ENCODE measurements at regions of chr20 and their contacts with region 1.

Region 1: GRCh38 chr20:34190679-34191090 is 50.5 kb upstream of the ASIP start:
- DNase-seq: peak; percentile 45 to 78
- H3K4me3 ChIP-seq: no peak overlapping the region
- H3K27ac ChIP-seq: no peak overlapping the region
- H3K4me1 ChIP-seq: no peaks in the 10 kb centered on the region
- H3K27me3 ChIP-seq: peaks cover 8% of the 10 kb centered on the region; the same call in 1 of the 2 replicates
- CTCF ChIP-seq: peak; percentile 78

Region 2: DNA sequence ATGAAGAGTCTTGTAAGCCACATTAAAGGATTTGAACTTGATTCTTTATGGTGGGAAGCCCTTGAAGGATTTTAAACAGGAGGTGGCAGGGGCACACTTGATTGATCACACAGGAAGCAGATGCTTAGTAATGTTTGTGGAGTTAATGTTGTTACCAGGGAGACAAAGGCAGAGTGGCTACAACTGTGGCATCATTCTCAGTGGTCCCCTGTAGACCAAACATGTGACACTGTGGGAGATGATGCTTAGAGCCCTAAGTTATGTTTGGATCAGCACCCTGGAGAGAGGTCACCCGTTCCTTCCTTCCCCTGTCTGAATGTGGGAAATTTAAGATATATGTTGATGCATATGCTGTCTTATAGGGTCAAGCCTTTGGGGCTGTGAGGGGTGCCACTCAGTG is 131.9 kb before region 1 on chr20:
- CTCF ChIA-PET with region 1: no interaction called
- POLR2A ChIA-PET with region 1: no interaction called
- intact Hi-C with region 1: no loop called
- DNase-seq: no peak
- H3K4me3 ChIP-seq: no peak overlapping the region
- H3K27ac ChIP-seq: no peak overlapping the region
- H3K4me1 ChIP-seq: no peaks in the 10 kb centered on the region
- H3K27me3 ChIP-seq: no peaks in the 10 kb centered on the region
- CTCF ChIP-seq: no peak

Region 3: GRCh38 chr20:34129518-34130162 is 61.0 kb before region 1 on chr20:
- CTCF ChIA-PET with region 1: no interaction called
- POLR2A ChIA-PET with region 1: no interaction called
- intact Hi-C with region 1: no loop called
- DNase-seq: peak; percentile 55 to 60
- H3K4me3 ChIP-seq: no peak overlapping the region
- H3K27ac ChIP-seq: no peak overlapping the region
- H3K4me1 ChIP-seq: peaks cover 4% of the 10 kb centered on the region
- H3K27me3 ChIP-seq: no peaks in the 10 kb centered on the region
- CTCF ChIP-seq: peak; percentile 91

Region 4: GRCh38 chr20:34249291-34249690 is 58.6 kb after region 1 on chr20:
- CTCF ChIA-PET with region 1: interaction called, 11 read pairs
- POLR2A ChIA-PET with region 1: no interaction called
- intact Hi-C with region 1: no loop called
- DNase-seq: no peak
- H3K4me3 ChIP-seq: no peak overlapping the region
- H3K27ac ChIP-seq: no peak overlapping the region
- H3K4me1 ChIP-seq: peaks cover 5% of the 10 kb centered on the region; the same call in 1 of the 2 replicates
- H3K27me3 ChIP-seq: no peaks in the 10 kb centered on the region
- CTCF ChIP-seq: no peak

Region 5: GRCh38 chr20:34522969-34523871 is 332.5 kb after region 1 on chr20:
- CTCF ChIA-PET with region 1: no interaction called
- POLR2A ChIA-PET with region 1: no interaction called
- intact Hi-C with region 1: loop called (anchors 2 kb)
- DNase-seq: peak; percentile 44 to 55
- H3K4me3 ChIP-seq: no peak overlapping the region
- H3K27ac ChIP-seq: no peak overlapping the region
- H3K4me1 ChIP-seq: peaks cover 37% of the 10 kb centered on the region
- H3K27me3 ChIP-seq: no peaks in the 10 kb centered on the region
- CTCF ChIP-seq: peak; percentile 57

Region 6: DNA sequence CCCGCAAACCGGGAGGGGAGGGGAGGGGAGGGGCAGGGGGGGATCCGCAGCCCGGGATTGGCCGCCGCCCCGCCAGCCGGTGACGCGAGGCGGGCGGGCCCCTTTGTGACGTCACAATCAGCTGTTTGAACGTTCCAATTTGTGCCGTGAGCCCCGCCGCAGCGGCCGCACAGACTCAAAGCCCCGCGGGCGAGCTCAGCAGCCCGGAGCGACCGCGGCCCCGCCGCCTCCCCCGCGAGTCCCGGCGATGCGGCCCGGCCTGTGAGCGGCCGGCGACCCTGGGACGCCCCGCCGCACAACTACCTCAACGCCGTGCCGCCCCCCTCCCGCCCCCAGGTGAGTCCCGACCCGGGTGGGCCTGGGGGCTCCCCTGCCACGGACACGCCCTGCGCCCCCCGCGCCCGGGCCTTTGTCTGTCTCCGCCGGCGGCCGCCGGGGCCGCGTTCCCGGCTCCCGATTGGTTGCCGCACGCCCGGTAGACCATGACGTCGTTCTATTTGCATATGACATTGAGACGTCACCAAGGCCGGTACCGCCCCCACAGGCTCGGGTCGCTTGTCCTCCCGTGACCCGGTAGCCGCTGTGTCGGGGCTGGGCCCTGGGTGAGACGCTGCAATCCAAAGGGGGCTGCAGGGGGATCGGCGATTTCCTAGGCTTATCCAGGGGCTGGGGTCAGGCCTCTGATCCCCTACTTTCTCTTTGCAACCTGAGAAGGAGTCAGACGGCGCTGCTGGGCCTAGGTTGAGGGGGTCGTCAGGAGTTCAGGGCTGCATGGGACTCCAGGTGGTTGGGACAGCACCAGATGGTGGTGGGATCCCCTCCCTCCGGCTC is 513.7 kb after region 1 on chr20 and contains the start of gene TP53INP2:
- CTCF ChIA-PET with region 1: no interaction called
- POLR2A ChIA-PET with region 1: interaction called, 4 read pairs
- intact Hi-C with region 1: loop called (anchors 5 kb)
- DNase-seq: peak; percentile 61 to 80
- H3K4me3 ChIP-seq: peak within 1 kb of the TSS; percentile 64
- H3K27ac ChIP-seq: peak within 1 kb of the TSS; percentile 16; the same call in 1 of the 2 replicates
- H3K4me1 ChIP-seq: peaks cover 34% of the 10 kb centered on the region
- H3K27me3 ChIP-seq: no peaks in the 10 kb centered on the region
- CTCF ChIP-seq: no peak
- total RNA-seq, gene TP53INP2: 4.4 and 4.9 TPM in 2 replicates